ENCODE measurements at regions of chr14 and their contacts with region 1.

Region 1: DNA sequence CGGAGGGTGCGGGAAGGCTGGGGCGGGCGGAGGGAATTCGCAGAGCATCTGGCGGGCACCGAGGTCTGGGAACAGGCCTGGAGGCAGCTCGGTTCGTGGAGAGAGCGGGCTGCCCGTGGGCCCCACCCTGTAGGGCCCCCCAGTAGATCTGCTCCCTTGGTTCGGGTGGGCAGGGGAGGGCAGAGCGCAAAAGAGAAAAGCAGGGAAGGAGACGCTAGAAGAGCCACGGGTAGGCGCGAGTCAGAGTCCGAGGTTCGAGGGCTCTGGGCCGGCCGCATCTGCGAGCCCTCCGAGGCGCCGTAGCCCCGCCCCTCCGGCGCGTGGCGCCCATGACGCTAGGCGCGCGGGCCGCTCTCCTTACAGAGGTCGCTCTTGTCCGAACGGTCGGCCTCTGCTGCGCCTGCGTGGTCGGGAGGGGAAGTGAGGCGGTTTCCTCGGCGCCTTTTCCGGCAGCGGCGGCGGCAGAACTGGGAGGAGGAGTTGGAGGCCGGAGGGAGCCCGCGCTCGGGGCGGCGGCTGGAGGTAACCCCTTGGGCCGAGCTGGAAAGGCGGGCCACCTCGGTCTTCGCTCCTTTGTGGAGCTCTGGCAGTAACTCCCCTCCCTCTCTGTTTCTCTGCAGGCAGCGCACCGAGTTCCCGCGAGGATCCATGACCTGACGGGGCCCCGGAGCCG is at the start of gene ARF6:
- DNase-seq: peak; percentile 86 to 98 (median 96)
- ATAC-seq: peak; percentile 69
- H3K4me3 ChIP-seq: peak within 1 kb of the TSS; percentile 96
- H3K4me3 Mint-ChIP-seq: peak within 1 kb of the TSS; percentile 98
- H3K27ac ChIP-seq: peak within 1 kb of the TSS; percentile 93 to 99
- H3K27ac Mint-ChIP-seq: peak within 1 kb of the TSS; percentile 96
- H3K4me1 ChIP-seq: peaks cover 19% of the 10 kb centered on the region
- H3K4me1 Mint-ChIP-seq: peaks cover 43% of the 10 kb centered on the region
- H3K27me3 ChIP-seq: no peaks in the 10 kb centered on the region
- H3K27me3 Mint-ChIP-seq: no peaks in the 10 kb centered on the region
- CTCF ChIP-seq: no peak
- total RNA-seq, gene ARF6: 67.2 to 69.7 TPM

Region 2: GRCh38 chr14:49796025-49796424 is 96.7 kb before region 1 on chr14:
- CTCF ChIA-PET with region 1: no interaction called
- POLR2A ChIA-PET with region 1: no interaction called
- intact Hi-C with region 1: no loop called
- DNase-seq: no peak
- ATAC-seq: no peak
- H3K4me3 ChIP-seq: no peak overlapping the region
- H3K4me3 Mint-ChIP-seq: no peak overlapping the region
- H3K27ac ChIP-seq: no peak overlapping the region
- H3K27ac Mint-ChIP-seq: no peak overlapping the region
- H3K4me1 ChIP-seq: no peaks in the 10 kb centered on the region
- H3K4me1 Mint-ChIP-seq: no peaks in the 10 kb centered on the region
- H3K27me3 ChIP-seq: no peaks in the 10 kb centered on the region
- H3K27me3 Mint-ChIP-seq: no peaks in the 10 kb centered on the region
- CTCF ChIP-seq: no peak

Region 3: DNA sequence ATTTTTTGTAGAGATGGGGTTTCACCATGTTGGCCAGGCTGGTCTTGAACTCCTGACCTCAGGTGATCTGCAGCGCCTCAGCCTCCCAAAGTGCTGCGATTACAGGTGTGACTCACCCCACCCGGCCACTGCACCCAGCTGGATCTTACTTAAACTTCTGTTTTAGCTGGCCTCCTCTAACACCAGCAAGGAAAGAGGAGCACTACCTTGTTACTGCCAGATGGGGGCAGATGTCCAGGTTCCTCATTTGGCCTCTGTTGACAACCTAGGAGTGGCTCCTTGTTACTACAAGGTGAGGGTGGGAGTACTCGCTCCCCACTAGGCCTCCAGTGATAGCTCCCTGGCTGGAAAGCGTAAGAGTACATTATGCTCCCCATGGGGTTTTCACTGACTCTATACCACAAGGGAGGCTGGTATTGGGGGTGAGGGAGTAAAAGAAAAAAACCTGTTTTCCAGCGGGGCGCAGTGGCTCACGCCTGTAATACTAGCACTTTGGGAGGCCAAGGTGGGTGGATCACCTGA is 13.0 kb before region 1 on chr14:
- CTCF ChIA-PET with region 1: interaction called, 6 read pairs
- POLR2A ChIA-PET with region 1: interaction called, 14 read pairs
- intact Hi-C with region 1: no loop called
- DNase-seq: peak; percentile 22 to 86 (median 38)
- ATAC-seq: peak; percentile 94
- H3K4me3 ChIP-seq: no peak overlapping the region
- H3K4me3 Mint-ChIP-seq: no peak overlapping the region
- H3K27ac ChIP-seq: no peak overlapping the region
- H3K27ac Mint-ChIP-seq: peak overlapping the region; percentile 64
- H3K4me1 ChIP-seq: peaks cover 17% of the 10 kb centered on the region
- H3K4me1 Mint-ChIP-seq: peaks cover 18% of the 10 kb centered on the region
- H3K27me3 ChIP-seq: no peaks in the 10 kb centered on the region
- H3K27me3 Mint-ChIP-seq: no peaks in the 10 kb centered on the region
- CTCF ChIP-seq: peak; percentile 46

Region 4: DNA sequence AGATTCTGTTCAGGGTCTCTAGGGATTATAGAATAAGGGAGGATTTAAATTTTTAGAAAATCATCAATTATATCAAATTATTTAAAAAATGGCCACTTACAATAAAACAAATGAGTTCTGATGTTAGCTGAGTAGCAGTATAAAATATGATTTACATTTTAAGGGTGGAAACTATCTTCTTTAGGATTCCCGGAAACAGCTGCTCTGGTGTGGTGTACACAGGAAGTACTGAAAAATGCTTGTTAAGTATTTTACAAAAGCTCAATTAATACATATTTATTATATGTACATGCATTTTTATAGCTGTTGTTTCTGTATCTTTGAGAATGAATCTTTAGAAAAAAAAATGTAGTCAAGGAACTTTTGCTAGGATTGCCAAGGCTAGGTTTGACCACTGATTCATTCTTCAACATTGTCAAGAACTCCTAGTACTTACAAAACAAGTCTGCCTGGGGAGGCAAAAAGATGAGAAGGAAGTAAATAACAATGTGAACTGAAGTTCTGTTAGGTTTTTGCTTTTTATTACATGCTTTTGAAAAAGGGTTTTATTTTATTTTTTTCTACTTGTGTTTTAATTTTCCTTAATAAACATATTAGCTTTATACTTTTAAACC is 48.1 kb after region 1 on chr14:
- CTCF ChIA-PET with region 1: interaction called, 4 read pairs
- POLR2A ChIA-PET with region 1: interaction called, 14 read pairs
- intact Hi-C with region 1: loop called in 1 of 2 experiments (anchors 2 kb)
- DNase-seq: peak in 6 of 14 experiments; percentile 10 to 75 (median 34)
- ATAC-seq: peak; percentile 68
- H3K4me3 ChIP-seq: peak overlapping the region; percentile 19
- H3K4me3 Mint-ChIP-seq: peak overlapping the region; percentile 69
- H3K27ac ChIP-seq: peak overlapping the region in 1 of 2 donors; percentile 38
- H3K27ac Mint-ChIP-seq: peak overlapping the region; percentile 57
- H3K4me1 ChIP-seq: peaks cover 47% of the 10 kb centered on the region
- H3K4me1 Mint-ChIP-seq: peaks cover 68% of the 10 kb centered on the region
- H3K27me3 ChIP-seq: no peaks in the 10 kb centered on the region
- H3K27me3 Mint-ChIP-seq: no peaks in the 10 kb centered on the region
- CTCF ChIP-seq: no peak

Region 5: DNA sequence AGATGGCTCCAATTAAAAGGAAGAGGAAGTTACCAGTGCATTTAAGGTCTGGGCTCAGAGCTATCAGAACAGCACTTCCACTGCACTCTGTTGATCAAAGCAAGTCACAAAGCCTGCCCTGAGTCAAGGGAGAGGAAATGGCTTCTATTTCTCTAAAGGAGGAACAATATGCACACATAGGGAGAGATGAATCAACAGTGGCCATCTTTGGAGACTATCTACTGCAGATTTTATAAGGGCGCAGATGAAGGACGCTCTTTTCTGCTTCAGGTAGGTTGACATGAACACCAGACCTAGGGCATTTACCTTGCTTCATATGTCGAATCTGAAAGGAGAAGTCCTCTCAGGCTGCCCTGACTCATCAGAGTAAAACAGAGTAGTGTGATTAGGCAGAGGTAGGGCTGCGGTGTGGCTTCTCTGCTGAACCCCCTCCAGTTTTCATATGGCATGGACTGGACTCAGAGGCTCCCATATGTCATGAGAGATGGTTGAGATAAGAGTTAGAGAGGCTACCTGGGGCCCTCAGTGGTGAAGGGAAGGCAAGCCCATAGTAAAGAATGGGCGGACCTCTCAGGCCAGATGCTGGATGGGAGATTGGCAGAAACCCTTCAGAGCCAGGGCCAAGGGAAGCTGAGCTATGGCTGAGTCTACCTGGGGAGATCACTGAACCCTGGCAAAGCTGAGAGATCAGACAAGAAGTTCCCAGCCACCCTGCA is 84.5 kb after region 1 on chr14:
- CTCF ChIA-PET with region 1: interaction called, 4 read pairs
- POLR2A ChIA-PET with region 1: interaction called, 52 read pairs
- intact Hi-C with region 1: loop called in 1 of 2 experiments (anchors 5 kb)
- DNase-seq: peak in 9 of 14 experiments; percentile 12 to 83 (median 40)
- ATAC-seq: peak; percentile 86
- H3K4me3 ChIP-seq: peak overlapping the region; percentile 41
- H3K4me3 Mint-ChIP-seq: peak overlapping the region; percentile 74
- H3K27ac ChIP-seq: peak overlapping the region; percentile 67 to 85
- H3K27ac Mint-ChIP-seq: peak overlapping the region; percentile 90
- H3K4me1 ChIP-seq: peaks cover 94% of the 10 kb centered on the region
- H3K4me1 Mint-ChIP-seq: peaks cover 83% of the 10 kb centered on the region
- H3K27me3 ChIP-seq: no peaks in the 10 kb centered on the region
- H3K27me3 Mint-ChIP-seq: no peaks in the 10 kb centered on the region
- CTCF ChIP-seq: no peak

Region 6: DNA sequence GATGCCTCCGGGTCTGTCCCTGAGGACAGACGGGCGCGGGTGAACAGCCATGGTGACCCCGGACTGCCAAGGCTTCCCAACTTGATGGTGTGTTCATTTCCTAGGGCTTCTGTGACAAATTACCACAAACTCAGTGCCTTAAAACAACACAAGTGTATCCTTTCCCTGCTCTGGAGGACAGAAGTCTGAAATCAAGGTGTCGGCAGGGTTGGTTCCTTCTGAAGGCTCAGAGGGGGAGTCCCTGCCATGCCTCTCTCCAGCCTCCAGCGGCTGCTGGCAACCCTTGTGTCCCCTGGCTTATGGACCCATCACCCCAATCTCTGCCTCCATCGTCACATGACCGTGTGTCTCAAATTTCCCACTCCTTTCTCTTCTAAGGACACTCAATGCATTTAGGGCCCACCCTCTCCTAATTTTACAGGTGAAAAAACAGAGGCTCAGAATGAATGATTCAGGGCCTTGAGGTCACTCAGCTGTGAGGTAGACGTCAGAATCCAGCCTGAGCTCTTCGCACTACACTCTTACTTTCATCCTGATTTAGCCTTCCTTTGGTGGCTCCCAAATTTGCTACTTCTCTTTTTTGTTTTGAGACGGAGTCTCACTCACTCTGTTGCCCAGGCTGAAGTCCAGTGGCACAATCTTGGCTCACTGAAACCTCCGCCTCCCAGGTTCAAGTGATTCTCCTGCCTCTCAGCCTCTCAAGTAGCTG is 178.2 kb after region 1 on chr14:
- CTCF ChIA-PET with region 1: no interaction called
- POLR2A ChIA-PET with region 1: no interaction called
- intact Hi-C with region 1: no loop called
- DNase-seq: no peak
- ATAC-seq: no peak
- H3K4me3 ChIP-seq: no peak overlapping the region
- H3K4me3 Mint-ChIP-seq: no peak overlapping the region
- H3K27ac ChIP-seq: no peak overlapping the region
- H3K27ac Mint-ChIP-seq: no peak overlapping the region
- H3K4me1 ChIP-seq: peaks cover 4% of the 10 kb centered on the region
- H3K4me1 Mint-ChIP-seq: peaks cover 36% of the 10 kb centered on the region
- H3K27me3 ChIP-seq: no peaks in the 10 kb centered on the region
- H3K27me3 Mint-ChIP-seq: no peaks in the 10 kb centered on the region
- CTCF ChIP-seq: no peak

Region 7: DNA sequence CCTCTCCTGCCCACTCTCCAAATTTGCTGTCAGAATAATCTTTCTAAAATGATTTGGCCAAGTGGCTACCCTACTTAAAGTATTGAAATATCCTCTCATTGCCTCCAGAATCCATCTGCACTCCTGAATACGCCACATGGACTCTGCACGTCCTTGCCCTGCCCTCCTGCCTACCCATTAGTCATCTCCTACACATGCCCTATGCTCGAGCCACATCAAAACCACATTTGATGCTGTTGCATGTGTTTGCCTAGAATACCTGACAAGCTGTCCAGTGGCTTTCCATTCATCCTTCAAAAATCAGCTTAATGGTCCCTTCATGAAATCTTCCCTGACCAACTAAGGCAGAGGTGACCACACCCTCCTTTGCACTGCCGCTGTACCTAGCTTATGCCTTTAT is 206.6 kb after region 1 on chr14:
- CTCF ChIA-PET with region 1: no interaction called
- POLR2A ChIA-PET with region 1: interaction called, 11 read pairs
- intact Hi-C with region 1: no loop called
- DNase-seq: peak in 1 of 14 experiments; percentile 39
- ATAC-seq: no peak
- H3K4me3 ChIP-seq: no peak overlapping the region
- H3K4me3 Mint-ChIP-seq: peak overlapping the region; percentile 12
- H3K27ac ChIP-seq: no peak overlapping the region
- H3K27ac Mint-ChIP-seq: peak overlapping the region; percentile 79
- H3K4me1 ChIP-seq: peaks cover 47% of the 10 kb centered on the region
- H3K4me1 Mint-ChIP-seq: peaks cover 64% of the 10 kb centered on the region
- H3K27me3 ChIP-seq: no peaks in the 10 kb centered on the region
- H3K27me3 Mint-ChIP-seq: no peaks in the 10 kb centered on the region
- CTCF ChIP-seq: no peak